CD4-positive, alpha-beta T cell (primary cell): ENCODE measurements at regions of chr22 and their contacts with region 1.

Region 1: GRCh38 chr22:37807410-37808293 is at the start of gene GCAT:
- DNase-seq: peak; percentile 61 to 96 (median 79)
- ATAC-seq: peak; percentile 81
- H3K4me3 ChIP-seq: peak within 1 kb of the TSS; percentile 58
- H3K4me3 Mint-ChIP-seq: peak within 1 kb of the TSS; percentile 84
- H3K27ac ChIP-seq: no peak within 1 kb of the TSS
- H3K27ac Mint-ChIP-seq: no peak within 1 kb of the TSS
- H3K4me1 ChIP-seq: peaks cover 61% of the 10 kb centered on the region
- H3K4me1 Mint-ChIP-seq: peaks cover 46% of the 10 kb centered on the region
- H3K27me3 ChIP-seq: peaks cover 50 to 66% of the 10 kb centered on the region in 2 experiments
- H3K27me3 Mint-ChIP-seq: peaks cover 43% of the 10 kb centered on the region
- CTCF ChIP-seq: no peak
- total RNA-seq, gene GCAT: 1.4 to 1.8 TPM

Region 2: GRCh38 chr22:37745548-37746365 is 61.9 kb before region 1 on chr22:
- CTCF ChIA-PET with region 1: no interaction called
- POLR2A ChIA-PET with region 1: no interaction called
- intact Hi-C with region 1: loop called in 1 of 2 experiments (anchors 2 kb)
- DNase-seq: peak; percentile 68 to 92 (median 84)
- ATAC-seq: peak; percentile 95
- H3K4me3 ChIP-seq: peak overlapping the region; percentile 90
- H3K4me3 Mint-ChIP-seq: peak overlapping the region; percentile 96
- H3K27ac ChIP-seq: peak overlapping the region in 1 of 2 donors; percentile 13
- H3K27ac Mint-ChIP-seq: peak overlapping the region; percentile 83
- H3K4me1 ChIP-seq: peaks cover 27% of the 10 kb centered on the region
- H3K4me1 Mint-ChIP-seq: peaks cover 22% of the 10 kb centered on the region
- H3K27me3 ChIP-seq: no peaks in the 10 kb centered on the region
- H3K27me3 Mint-ChIP-seq: no peaks in the 10 kb centered on the region
- CTCF ChIP-seq: no peak

Region 3: GRCh38 chr22:39215426-39216120 is 1407.9 kb after region 1 on chr22:
- CTCF ChIA-PET with region 1: no interaction called
- POLR2A ChIA-PET with region 1: no interaction called
- intact Hi-C with region 1: no loop called
- DNase-seq: peak in 10 of 14 experiments; percentile 17 to 73 (median 36)
- ATAC-seq: peak; percentile 96
- H3K4me3 ChIP-seq: no peak overlapping the region
- H3K4me3 Mint-ChIP-seq: no peak overlapping the region
- H3K27ac ChIP-seq: no peak overlapping the region
- H3K27ac Mint-ChIP-seq: no peak overlapping the region
- H3K4me1 ChIP-seq: no peaks in the 10 kb centered on the region
- H3K4me1 Mint-ChIP-seq: peaks cover 4% of the 10 kb centered on the region
- H3K27me3 ChIP-seq: peaks cover 5 to 14% of the 10 kb centered on the region in 2 experiments
- H3K27me3 Mint-ChIP-seq: peaks cover 23% of the 10 kb centered on the region
- CTCF ChIP-seq: peak; percentile 14